ENCODE measurements at regions of chr1 and their contacts with region 1.

Region 1: DNA sequence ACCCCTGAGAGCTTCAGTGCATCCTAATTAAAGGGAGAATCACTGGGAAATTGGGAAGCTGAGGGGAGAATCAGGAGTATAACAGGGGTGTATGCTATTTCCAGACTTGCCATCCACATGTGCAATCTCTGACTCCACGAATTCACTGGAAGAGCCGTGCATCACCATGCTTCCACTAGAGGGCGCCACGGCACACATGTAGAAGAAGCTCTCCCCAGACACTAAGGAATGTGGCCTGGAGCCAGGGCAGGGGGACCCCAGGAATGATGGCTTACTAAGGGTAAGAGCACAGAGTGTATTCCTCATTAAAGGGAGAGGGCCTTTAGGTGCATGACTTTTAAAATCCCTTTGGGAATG is 81.5 kb downstream of the ABCA4 start:
- DNase-seq: peak; percentile 82
- ATAC-seq: no peak
- H3K4me3 Mint-ChIP-seq: no peak overlapping the region
- H3K27ac Mint-ChIP-seq: no peak overlapping the region
- H3K4me1 Mint-ChIP-seq: peaks cover 26% of the 10 kb centered on the region
- H3K27me3 Mint-ChIP-seq: peaks cover 30% of the 10 kb centered on the region

Region 2: DNA sequence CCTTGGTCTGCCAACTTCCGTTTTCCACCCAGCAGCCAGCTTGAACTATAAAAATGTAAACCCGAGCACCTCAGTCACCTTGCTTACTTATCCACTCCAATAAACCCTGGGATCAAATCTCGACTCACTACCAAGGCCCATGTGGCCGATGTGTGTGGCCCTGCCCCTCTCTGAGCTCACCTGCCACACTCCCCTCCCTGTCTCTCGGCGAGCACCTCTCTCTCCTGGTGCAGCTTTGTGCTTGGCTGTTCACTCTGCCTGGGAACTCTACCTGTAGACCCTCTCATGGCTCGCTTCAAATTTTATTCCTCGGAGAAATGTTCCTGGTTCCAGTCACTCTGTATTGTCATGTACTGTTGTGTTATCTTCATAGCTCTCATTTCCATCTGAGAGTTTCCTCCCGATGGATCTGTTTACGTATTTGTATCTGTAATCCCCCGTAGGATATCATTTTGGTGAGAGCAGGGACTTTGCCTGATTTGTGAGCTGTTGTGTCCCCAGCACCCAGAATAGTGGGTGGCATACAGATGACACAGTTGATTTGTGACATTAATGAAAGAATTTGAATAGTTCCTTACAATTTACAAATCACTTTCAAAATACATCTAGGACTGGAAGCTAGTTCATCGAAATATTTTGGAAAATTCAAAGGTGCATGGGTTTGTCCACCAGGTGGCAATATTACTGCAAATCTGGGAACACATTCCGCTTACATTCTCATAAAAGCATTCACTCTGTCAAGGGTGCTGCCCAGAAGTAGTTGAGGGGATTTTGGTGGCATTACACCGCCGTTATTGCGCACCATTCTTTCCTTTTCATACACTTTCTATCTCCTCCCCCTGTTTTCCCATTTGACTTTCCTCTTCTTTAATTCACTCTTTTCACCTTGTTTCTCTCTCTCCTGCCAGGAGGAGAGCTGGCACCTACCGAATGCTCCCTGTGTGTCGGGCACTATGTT is 13.8 kb before region 1 on chr1:
- CTCF ChIA-PET with region 1: interaction called, 59 read pairs
- POLR2A ChIA-PET with region 1: no interaction called
- intact Hi-C with region 1: no loop called
- DNase-seq: no peak
- ATAC-seq: peak; percentile 30
- H3K4me3 Mint-ChIP-seq: no peak overlapping the region
- H3K27ac Mint-ChIP-seq: peak overlapping the region; percentile 44
- H3K4me1 Mint-ChIP-seq: peaks cover 2% of the 10 kb centered on the region
- H3K27me3 Mint-ChIP-seq: peaks cover 4% of the 10 kb centered on the region

Region 3: DNA sequence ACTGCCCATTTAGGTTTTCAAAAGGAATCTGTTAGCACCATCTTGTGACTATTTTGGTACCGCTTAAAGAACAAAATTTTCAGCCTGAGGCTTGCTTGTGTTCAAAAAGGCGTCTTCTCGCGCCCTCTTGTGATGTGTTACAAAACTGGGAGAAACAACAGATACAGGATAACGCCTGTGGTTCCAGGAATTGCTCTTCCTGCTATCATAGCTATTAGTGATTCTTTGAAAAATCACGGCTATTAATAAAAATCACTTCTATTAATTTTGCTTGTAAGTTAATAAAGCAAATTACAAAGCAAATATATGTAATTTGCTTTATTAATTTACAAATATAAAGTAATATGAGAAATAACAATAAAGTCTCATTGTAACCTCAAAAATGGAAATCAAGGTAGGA is 296.5 kb after region 1 on chr1:
- CTCF ChIA-PET with region 1: interaction called, 56 read pairs
- POLR2A ChIA-PET with region 1: no interaction called
- intact Hi-C with region 1: no loop called
- DNase-seq: peak; percentile 60
- ATAC-seq: peak; percentile 60
- H3K4me3 Mint-ChIP-seq: no peak overlapping the region
- H3K27ac Mint-ChIP-seq: no peak overlapping the region
- H3K4me1 Mint-ChIP-seq: peaks cover 13% of the 10 kb centered on the region
- H3K27me3 Mint-ChIP-seq: peaks cover 5% of the 10 kb centered on the region

Region 4: GRCh38 chr1:94417978-94418663 is 378.6 kb after region 1 on chr1 and contains the start of gene ABCD3:
- CTCF ChIA-PET with region 1: interaction called, 4 read pairs
- POLR2A ChIA-PET with region 1: no interaction called
- intact Hi-C with region 1: loop called in 1 of 2 experiments (anchors 5 kb)
- DNase-seq: peak; percentile 98
- ATAC-seq: peak; percentile 91
- H3K4me3 Mint-ChIP-seq: no peak within 1 kb of the TSS
- H3K27ac Mint-ChIP-seq: peak within 1 kb of the TSS; percentile 87
- H3K4me1 Mint-ChIP-seq: peaks cover 29% of the 10 kb centered on the region
- H3K27me3 Mint-ChIP-seq: peaks cover 6% of the 10 kb centered on the region
- total RNA-seq, gene ABCD3: 46.1 to 67.1 TPM

Region 5: GRCh38 chr1:94805912-94806311 is 766.4 kb after region 1 on chr1:
- CTCF ChIA-PET with region 1: interaction called, 3 read pairs
- POLR2A ChIA-PET with region 1: no interaction called
- intact Hi-C with region 1: loop called in 1 of 2 experiments (anchors 5 kb)
- DNase-seq: peak; percentile 70
- ATAC-seq: peak; percentile 68
- H3K4me3 Mint-ChIP-seq: no peak overlapping the region
- H3K27ac Mint-ChIP-seq: no peak overlapping the region
- H3K4me1 Mint-ChIP-seq: peaks cover 13% of the 10 kb centered on the region
- H3K27me3 Mint-ChIP-seq: peaks cover 4% of the 10 kb centered on the region

Measured in activated CD4-positive, alpha-beta T cell treated with anti-CD3 and anti-CD28 coated beads for 36 hours (primary cell).